Endothelial cell of umbilical vein (primary cell): ENCODE measurements at regions of chr3 and their contacts with region 1.

Region 1: DNA sequence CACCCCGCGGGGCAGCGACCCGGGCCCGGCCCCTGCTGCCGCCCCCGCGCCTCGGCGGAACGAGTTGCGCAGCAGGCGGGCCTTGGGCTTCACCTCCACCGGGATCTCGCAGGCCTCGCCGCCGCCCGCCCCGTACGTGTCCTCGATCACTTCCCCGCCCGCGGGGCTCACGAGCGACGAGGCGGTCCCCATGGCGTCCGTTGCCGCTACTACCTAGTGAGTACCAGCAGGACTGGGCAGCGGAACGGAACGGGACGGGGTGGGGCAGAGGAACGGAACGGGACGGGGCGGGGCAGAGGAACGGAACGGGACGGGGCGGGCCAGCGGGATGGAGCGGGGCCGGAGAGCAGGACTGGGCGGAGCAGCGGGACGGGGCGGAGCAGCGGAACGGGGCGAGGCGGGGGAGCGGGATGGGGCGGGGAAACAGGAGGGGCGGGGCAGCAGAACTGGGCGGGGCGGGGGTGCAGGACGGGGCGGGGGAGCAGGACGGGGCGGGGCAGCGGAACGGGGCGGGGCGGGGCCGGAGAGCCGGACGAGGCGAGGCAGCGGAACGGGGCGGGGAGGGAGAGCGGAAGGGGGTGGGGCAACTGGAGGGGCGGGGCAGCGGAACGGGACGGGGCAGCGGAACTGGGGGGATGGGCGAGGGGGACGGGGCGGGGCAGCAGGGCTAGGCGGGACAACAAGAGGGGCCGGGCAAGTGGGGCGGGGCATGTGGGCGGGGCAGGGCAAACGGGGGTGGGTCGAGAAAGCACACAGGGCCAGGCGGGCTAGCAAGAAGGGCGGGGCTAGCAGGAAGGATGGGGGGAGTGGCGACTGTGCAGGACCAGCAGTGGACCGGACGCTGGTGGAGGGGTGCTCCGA is at the start of gene NPHP3:
- DNase-seq: peak; percentile 93
- H3K4me3 ChIP-seq: peak within 1 kb of the TSS; percentile 86 to 98 (median 93)
- H3K27ac ChIP-seq: peak within 1 kb of the TSS; percentile 63
- H3K4me1 ChIP-seq: peaks cover 26% of the 10 kb centered on the region
- H3K27me3 ChIP-seq: no peaks in the 10 kb centered on the region
- CTCF ChIP-seq: no peak
- POLR2A ChIP-seq: peak; percentile 92
- total RNA-seq, gene NPHP3: 30.0 and 30.3 TPM in 2 replicates

Region 2: GRCh38 chr3:132416807-132417694 is 305.3 kb before region 1 on chr3 and contains the start of gene DNAJC13:
- CTCF ChIA-PET with region 1: no interaction called
- POLR2A ChIA-PET with region 1: no interaction called
- dilution Hi-C with region 1: no loop called
- intact Hi-C with region 1: loop called (anchors 1 kb)
- DNase-seq: peak; percentile 96
- H3K4me3 ChIP-seq: peak within 1 kb of the TSS; percentile 87 to 100 (median 89)
- H3K27ac ChIP-seq: peak within 1 kb of the TSS; percentile 59
- H3K4me1 ChIP-seq: peaks cover 20% of the 10 kb centered on the region
- H3K27me3 ChIP-seq: no peaks in the 10 kb centered on the region
- CTCF ChIP-seq: no peak
- POLR2A ChIP-seq: no peak
- total RNA-seq, gene DNAJC13: 64.0 and 71.7 TPM in 2 replicates

Region 3: GRCh38 chr3:132738314-132738713 is 15.9 kb after region 1 on chr3:
- CTCF ChIA-PET with region 1: interaction called, 11 read pairs
- POLR2A ChIA-PET with region 1: no interaction called
- dilution Hi-C with region 1: no loop called
- intact Hi-C with region 1: no loop called
- DNase-seq: no peak
- H3K4me3 ChIP-seq: no peak overlapping the region
- H3K27ac ChIP-seq: no peak overlapping the region
- H3K4me1 ChIP-seq: peaks cover 5% of the 10 kb centered on the region
- H3K27me3 ChIP-seq: peaks cover 0 to 2% of the 10 kb centered on the region in 2 experiments
- CTCF ChIP-seq: no peak
- POLR2A ChIP-seq: no peak

Region 4: GRCh38 chr3:132758740-132759139 is 36.3 kb after region 1 on chr3:
- CTCF ChIA-PET with region 1: no interaction called
- POLR2A ChIA-PET with region 1: no interaction called
- dilution Hi-C with region 1: no loop called
- intact Hi-C with region 1: no loop called
- DNase-seq: no peak
- H3K4me3 ChIP-seq: no peak overlapping the region
- H3K27ac ChIP-seq: no peak overlapping the region
- H3K4me1 ChIP-seq: no peaks in the 10 kb centered on the region
- H3K27me3 ChIP-seq: no peaks in the 10 kb centered on the region
- CTCF ChIP-seq: no peak
- POLR2A ChIP-seq: no peak

Region 5: GRCh38 chr3:133377396-133377795 is 655.0 kb after region 1 on chr3:
- CTCF ChIA-PET with region 1: interaction called, 35 read pairs
- POLR2A ChIA-PET with region 1: no interaction called
- dilution Hi-C with region 1: no loop called
- intact Hi-C with region 1: loop called (anchors 1 kb)
- DNase-seq: peak; percentile 52
- H3K4me3 ChIP-seq: no peak overlapping the region
- H3K27ac ChIP-seq: no peak overlapping the region
- H3K4me1 ChIP-seq: no peaks in the 10 kb centered on the region
- H3K27me3 ChIP-seq: no peaks in the 10 kb centered on the region
- CTCF ChIP-seq: peak; percentile 39 to 41
- POLR2A ChIP-seq: no peak

Region 6: DNA sequence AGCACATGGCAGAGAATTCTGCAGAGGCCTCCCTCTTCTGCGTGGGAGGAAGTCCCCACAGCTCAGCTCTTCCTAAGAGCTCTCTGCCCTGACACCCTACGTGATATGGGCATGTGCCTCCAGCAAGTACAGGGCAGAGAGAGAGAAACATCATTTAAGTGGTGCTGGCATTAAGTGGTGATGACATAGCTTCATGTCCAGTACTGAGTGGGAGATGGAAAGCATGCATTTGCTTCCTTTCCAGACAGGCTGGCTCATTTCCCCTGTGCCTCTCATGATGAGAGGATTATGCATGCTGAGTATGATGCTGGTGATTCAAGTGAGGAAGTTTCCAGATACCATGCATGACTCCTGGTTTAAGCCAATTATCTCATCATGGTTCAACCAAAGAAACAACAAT is 704.3 kb after region 1 on chr3:
- CTCF ChIA-PET with region 1: interaction called, 32 read pairs
- POLR2A ChIA-PET with region 1: no interaction called
- dilution Hi-C with region 1: no loop called
- intact Hi-C with region 1: loop called (anchors 1 kb)
- DNase-seq: no peak
- H3K4me3 ChIP-seq: no peak overlapping the region
- H3K27ac ChIP-seq: no peak overlapping the region
- H3K4me1 ChIP-seq: no peaks in the 10 kb centered on the region
- H3K27me3 ChIP-seq: peaks cover 0 to 12% of the 10 kb centered on the region in 2 experiments
- CTCF ChIP-seq: no peak
- POLR2A ChIP-seq: no peak

Region 7: DNA sequence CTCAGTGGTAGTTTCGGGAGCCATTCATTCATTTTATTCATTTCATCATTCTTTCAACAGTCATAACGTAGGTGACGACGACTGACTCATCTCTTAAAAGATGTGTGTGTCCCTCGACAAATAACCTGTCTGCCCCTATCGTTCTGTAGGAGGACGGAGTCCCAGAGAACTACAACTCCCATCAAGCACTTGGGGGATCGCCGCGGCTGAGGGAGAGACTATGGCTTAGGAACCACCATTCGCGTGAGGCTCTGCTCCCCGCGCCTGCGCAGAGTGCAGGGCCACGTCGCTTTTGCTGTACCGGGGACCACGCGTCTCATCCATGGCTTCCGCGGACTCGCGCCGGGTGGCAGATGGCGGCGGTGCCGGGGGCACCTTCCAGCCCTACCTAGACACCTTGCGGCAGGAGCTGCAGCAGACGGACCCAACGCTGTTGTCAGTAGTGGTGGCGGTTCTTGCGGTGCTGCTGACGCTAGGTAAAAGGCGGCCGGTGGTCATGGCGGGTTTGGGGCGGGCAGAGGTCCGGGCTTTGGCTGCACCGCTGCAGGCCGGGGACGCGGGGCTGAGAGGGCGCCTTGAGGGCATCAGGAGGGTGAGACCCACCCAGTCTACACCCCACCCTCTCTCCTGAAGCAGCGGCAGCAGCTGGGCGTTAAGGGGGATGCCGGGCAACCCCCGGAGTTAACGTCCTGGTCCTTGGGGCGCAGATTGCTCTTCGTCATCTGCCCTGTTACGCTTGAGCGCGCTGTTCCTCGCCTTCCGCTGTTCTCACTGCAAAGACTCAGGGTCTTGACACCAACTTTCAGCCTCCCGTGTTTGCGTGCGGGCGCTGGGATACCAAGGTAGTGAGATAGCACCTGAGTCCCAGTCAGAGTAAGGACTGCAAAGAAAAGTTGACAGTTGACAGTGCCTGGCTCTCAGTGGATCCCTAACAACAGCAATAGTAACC is 1083.4 kb after region 1 on chr3 and contains the start of gene SRPRB:
- CTCF ChIA-PET with region 1: no interaction called
- POLR2A ChIA-PET with region 1: no interaction called
- dilution Hi-C with region 1: no loop called
- intact Hi-C with region 1: loop called (anchors 10 kb)
- DNase-seq: peak; percentile 95
- H3K4me3 ChIP-seq: peak within 1 kb of the TSS; percentile 71 to 95 (median 82)
- H3K27ac ChIP-seq: peak within 1 kb of the TSS; percentile 35
- H3K4me1 ChIP-seq: peaks cover 6% of the 10 kb centered on the region
- H3K27me3 ChIP-seq: peaks cover 3 to 7% of the 10 kb centered on the region in 2 experiments
- CTCF ChIP-seq: no peak
- POLR2A ChIP-seq: no peak
- total RNA-seq, gene SRPRB: 59.5 and 69.2 TPM in 2 replicates